ENCODE measurements at regions of chr5 and their contacts with region 1.

Region 1: DNA sequence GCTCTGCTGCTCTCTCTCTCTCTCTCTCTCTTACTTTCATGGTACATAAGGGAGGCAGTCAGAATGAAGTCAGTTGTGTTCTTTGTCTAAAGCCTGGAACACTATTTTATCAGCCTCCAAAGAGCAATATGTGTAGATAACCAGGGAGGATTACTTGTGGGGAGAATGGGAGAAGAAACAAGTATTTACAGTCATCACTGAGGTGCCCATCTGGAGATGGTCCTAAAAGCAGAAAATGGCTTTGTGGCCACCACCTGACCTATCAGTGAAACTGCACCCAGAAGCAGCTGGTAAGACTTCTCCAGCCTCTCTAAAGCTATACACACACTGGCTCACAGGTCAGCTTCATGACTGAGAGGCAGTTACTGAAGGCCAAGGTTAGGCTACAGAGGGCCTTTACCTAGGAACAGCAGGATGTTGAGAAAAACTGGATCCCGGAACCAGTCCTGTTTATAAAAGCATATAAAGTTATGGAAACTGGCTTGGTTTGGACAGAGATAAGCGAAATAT is 75.1 kb downstream of the MRPS27 start:
- DNase-seq: peak; percentile 56
- H3K4me3 Mint-ChIP-seq: no peak overlapping the region
- H3K27ac Mint-ChIP-seq: peak overlapping the region; percentile 24
- H3K4me1 Mint-ChIP-seq: peaks cover 32% of the 10 kb centered on the region
- H3K27me3 Mint-ChIP-seq: no peaks in the 10 kb centered on the region
- CTCF ChIP-seq: peak; percentile 25

Region 2: GRCh38 chr5:72138943-72139521 is 105.9 kb before region 1 on chr5:
- CTCF ChIA-PET with region 1: interaction called, 3 read pairs
- POLR2A ChIA-PET with region 1: no interaction called
- intact Hi-C with region 1: loop called (anchors 2 kb)
- DNase-seq: peak; percentile 51
- H3K4me3 Mint-ChIP-seq: no peak overlapping the region
- H3K27ac Mint-ChIP-seq: no peak overlapping the region
- H3K4me1 Mint-ChIP-seq: peaks cover 33% of the 10 kb centered on the region
- H3K27me3 Mint-ChIP-seq: no peaks in the 10 kb centered on the region
- CTCF ChIP-seq: no peak

Region 3: GRCh38 chr5:72234265-72234700 is 10.6 kb before region 1 on chr5:
- CTCF ChIA-PET with region 1: interaction called, 4 read pairs
- POLR2A ChIA-PET with region 1: interaction called, 28 read pairs
- intact Hi-C with region 1: no loop called
- DNase-seq: peak; percentile 70
- H3K4me3 Mint-ChIP-seq: no peak overlapping the region
- H3K27ac Mint-ChIP-seq: no peak overlapping the region
- H3K4me1 Mint-ChIP-seq: peaks cover 23% of the 10 kb centered on the region
- H3K27me3 Mint-ChIP-seq: no peaks in the 10 kb centered on the region
- CTCF ChIP-seq: no peak

Measured in MCF 10A (cell line).